ENCODE measurements at regions of chr7 and their contacts with region 1.

Region 1: GRCh38 chr7:157339777-157340677 is 3.2 kb downstream of the DNAJB6 start:
- DNase-seq: peak; percentile 75
- H3K4me3 ChIP-seq: peak overlapping the region; percentile 76
- H3K27ac ChIP-seq: peak overlapping the region; percentile 34
- H3K4me1 ChIP-seq: peaks cover 51% of the 10 kb centered on the region
- CTCF ChIP-seq: peak; percentile 99

Region 2: GRCh38 chr7:157273208-157274093 is 66.6 kb before region 1 on chr7:
- CTCF ChIA-PET with region 1: interaction called, 3 read pairs
- POLR2A ChIA-PET with region 1: no interaction called
- intact Hi-C with region 1: loop called (anchors 2 kb)
- DNase-seq: peak; percentile 67
- H3K4me3 ChIP-seq: no peak overlapping the region
- H3K27ac ChIP-seq: no peak overlapping the region
- H3K4me1 ChIP-seq: no peaks in the 10 kb centered on the region
- CTCF ChIP-seq: peak; percentile 91

Region 3: GRCh38 chr7:157412021-157412443 is 72.0 kb after region 1 on chr7:
- CTCF ChIA-PET with region 1: no interaction called
- POLR2A ChIA-PET with region 1: no interaction called
- intact Hi-C with region 1: no loop called
- DNase-seq: no peak
- H3K4me3 ChIP-seq: no peak overlapping the region
- H3K27ac ChIP-seq: no peak overlapping the region
- H3K4me1 ChIP-seq: no peaks in the 10 kb centered on the region
- CTCF ChIP-seq: no peak

Measured in OCI-LY7 (cell line).